H1 (cell line): ENCODE measurements at regions of chr3 and their contacts with region 1.

Region 1: GRCh38 chr3:30693470-30694120 is 87.2 kb downstream of the TGFBR2 start:
- DNase-seq: no peak
- H3K4me3 ChIP-seq: no peak overlapping the region
- H3K27ac ChIP-seq: no peak overlapping the region
- H3K4me1 ChIP-seq: peaks cover 0 to 13% (median 5%) of the 10 kb centered on the region in 4 experiments; a peak in 5 of 7 replicates
- H3K27me3 ChIP-seq: no peaks in the 10 kb centered on the region
- CTCF ChIP-seq: peak in 2 of 3 experiments; percentile 80 to 85; a peak in 3 of 4 replicates
- EP300 ChIP-seq: no peak
- POLR2A ChIP-seq: no peak
- RAD21 ChIP-seq: peak; percentile 99

Region 2: GRCh38 chr3:30319713-30320112 is 373.9 kb before region 1 on chr3:
- CTCF ChIA-PET with region 1: interaction called, 12 read pairs
- POLR2A ChIA-PET with region 1: no interaction called
- DNase-seq: peak; percentile 7 to 43
- H3K4me3 ChIP-seq: no peak overlapping the region
- H3K27ac ChIP-seq: no peak overlapping the region
- H3K4me1 ChIP-seq: peaks cover 0 to 5% (median 0%) of the 10 kb centered on the region in 4 experiments; a peak in 1 of 7 replicates
- H3K27me3 ChIP-seq: no peaks in the 10 kb centered on the region
- CTCF ChIP-seq: peak in 2 of 3 experiments; percentile 59 to 74; a peak in 3 of 4 replicates
- EP300 ChIP-seq: no peak
- POLR2A ChIP-seq: no peak
- RAD21 ChIP-seq: peak; percentile 68 to 78

Region 3: GRCh38 chr3:30634761-30635735 is 58.5 kb before region 1 on chr3:
- CTCF ChIA-PET with region 1: no interaction called
- POLR2A ChIA-PET with region 1: no interaction called
- DNase-seq: no peak
- H3K4me3 ChIP-seq: no peak overlapping the region
- H3K27ac ChIP-seq: no peak overlapping the region
- H3K4me1 ChIP-seq: no peaks in the 10 kb centered on the region
- H3K27me3 ChIP-seq: no peaks in the 10 kb centered on the region
- CTCF ChIP-seq: no peak
- EP300 ChIP-seq: no peak
- POLR2A ChIP-seq: no peak
- RAD21 ChIP-seq: no peak

Region 4: GRCh38 chr3:30681643-30682211 is 11.9 kb before region 1 on chr3:
- CTCF ChIA-PET with region 1: interaction called, 51 read pairs
- POLR2A ChIA-PET with region 1: no interaction called
- DNase-seq: no peak
- H3K4me3 ChIP-seq: no peak overlapping the region
- H3K27ac ChIP-seq: no peak overlapping the region
- H3K4me1 ChIP-seq: peaks cover 0 to 7% (median 5%) of the 10 kb centered on the region in 4 experiments; a peak in 4 of 7 replicates
- H3K27me3 ChIP-seq: no peaks in the 10 kb centered on the region
- CTCF ChIP-seq: no peak
- EP300 ChIP-seq: no peak
- POLR2A ChIP-seq: no peak
- RAD21 ChIP-seq: no peak

Region 5: DNA sequence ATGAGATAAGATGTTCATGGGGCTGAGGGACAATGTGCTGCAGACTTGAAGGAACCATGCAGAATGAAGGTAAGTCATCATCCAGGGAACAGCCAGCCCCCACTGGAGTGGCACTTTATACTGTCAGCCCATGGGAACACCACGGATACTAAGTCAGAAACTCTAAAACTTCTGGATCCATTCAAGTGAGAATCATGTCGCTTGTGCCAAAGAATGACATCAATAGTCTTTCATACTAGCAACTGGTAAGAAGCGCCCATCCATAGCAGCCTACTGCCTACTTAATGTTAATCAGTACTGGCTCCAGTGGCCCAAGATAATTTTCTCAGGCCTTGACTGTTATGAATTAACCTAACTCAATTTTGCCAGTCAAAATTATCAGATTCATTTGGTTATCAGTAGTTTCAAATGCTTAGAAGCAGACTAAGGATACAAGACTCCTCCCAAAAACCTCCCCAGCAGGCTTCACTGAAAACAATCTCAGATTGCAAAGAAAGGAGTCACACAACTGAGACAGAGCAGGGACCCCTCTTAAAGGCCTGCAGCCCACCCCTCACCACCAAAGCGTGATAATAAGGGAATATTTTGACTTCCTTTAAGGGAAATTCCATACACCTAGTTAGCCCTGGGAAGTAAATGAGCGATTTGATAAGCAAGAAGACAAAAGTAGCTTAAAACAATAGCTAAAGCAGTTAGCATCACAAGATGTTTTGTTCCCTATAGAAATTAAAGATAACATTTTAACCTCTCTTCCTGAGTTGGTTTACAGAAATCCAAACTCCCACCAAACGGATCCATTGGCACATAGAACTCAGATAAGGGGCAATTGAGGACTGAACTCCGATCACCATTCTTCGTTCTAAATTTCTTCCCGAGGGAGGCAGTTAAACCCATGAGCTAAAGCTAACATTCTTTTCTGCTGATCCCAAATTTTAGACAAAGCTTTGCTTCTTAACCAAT is 11.6 kb after region 1 on chr3:
- CTCF ChIA-PET with region 1: interaction called, 18 read pairs
- POLR2A ChIA-PET with region 1: no interaction called
- DNase-seq: no peak
- H3K4me3 ChIP-seq: no peak overlapping the region
- H3K27ac ChIP-seq: no peak overlapping the region
- H3K4me1 ChIP-seq: peaks cover 0 to 6% (median 4%) of the 10 kb centered on the region in 4 experiments; a peak in 2 of 7 replicates
- H3K27me3 ChIP-seq: no peaks in the 10 kb centered on the region
- CTCF ChIP-seq: no peak
- EP300 ChIP-seq: no peak
- POLR2A ChIP-seq: no peak
- RAD21 ChIP-seq: no peak

Region 6: DNA sequence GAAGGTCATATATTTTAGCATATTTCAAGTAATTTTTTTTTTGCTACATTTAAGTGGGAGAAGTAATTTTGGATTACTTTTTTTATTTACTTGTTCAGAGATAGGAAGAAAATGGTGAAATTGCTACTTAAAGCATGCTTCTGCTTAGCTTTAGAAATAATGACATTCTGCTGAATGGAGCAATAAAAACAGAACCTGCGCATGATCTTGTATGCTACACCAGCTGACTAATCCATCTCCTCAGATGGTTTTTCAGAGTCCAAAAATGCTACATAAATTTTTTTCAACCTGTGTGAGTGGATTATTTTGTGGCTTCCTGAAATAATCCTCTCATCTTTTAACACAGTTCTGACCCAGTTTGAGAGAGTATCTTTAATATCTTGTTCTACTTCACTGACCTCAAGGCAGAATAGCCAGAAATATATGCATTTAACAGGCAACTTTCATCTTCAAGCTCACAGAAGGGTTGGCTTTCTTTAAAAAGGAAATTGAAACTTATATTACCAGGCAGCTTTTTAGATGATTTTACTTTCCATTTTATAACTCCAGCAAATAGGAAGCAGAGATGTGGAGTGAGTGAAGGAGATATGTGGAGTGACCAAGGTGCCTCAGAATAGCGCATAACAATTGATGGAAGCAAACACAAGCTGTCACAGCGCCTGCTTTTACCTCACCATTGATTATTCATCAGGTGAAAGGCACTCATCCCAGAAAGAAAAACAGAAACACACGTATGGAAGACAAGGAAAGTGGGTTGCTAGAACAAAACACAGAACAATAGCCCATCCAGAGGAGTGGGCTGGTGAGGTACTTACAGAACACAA is 49.4 kb after region 1 on chr3:
- CTCF ChIA-PET with region 1: interaction called, 10 read pairs
- POLR2A ChIA-PET with region 1: no interaction called
- DNase-seq: no peak
- H3K4me3 ChIP-seq: no peak overlapping the region
- H3K27ac ChIP-seq: no peak overlapping the region
- H3K4me1 ChIP-seq: peaks cover 0 to 12% (median 4%) of the 10 kb centered on the region in 4 experiments; a peak in 4 of 7 replicates
- H3K27me3 ChIP-seq: no peaks in the 10 kb centered on the region
- CTCF ChIP-seq: no peak
- EP300 ChIP-seq: no peak
- POLR2A ChIP-seq: no peak
- RAD21 ChIP-seq: no peak

Region 7: DNA sequence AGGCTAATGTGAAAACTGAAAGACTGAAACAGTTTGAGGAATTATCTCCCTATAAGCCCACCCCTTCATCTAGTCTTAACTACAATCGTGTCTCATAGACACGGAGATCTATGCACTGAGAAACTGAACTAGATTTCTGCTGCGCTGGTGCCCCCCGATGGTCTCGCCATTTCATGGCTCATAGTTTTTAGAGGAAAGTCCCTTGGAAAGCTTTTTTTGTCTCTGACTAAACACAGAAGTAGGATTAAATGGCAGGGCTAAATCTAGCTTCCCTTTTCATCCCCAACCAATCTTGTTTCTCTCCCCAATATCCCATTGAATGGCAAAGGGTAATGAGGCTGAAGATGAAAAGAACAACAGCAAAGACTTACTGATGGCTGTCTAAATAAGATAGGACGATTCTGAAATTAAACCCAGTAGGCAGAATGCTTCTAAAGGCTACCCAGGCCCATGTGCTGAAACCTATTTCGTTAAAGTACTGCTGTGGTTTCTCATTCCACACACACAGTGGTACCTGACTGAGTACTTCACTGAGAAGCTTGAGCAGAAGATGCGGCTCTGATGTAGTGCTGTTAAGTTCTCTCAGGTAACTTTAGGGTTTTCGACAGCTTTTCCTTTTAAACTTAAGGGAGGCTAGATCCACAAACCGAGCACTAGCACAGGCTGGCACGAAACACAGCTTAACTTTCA is 58.2 kb after region 1 on chr3:
- CTCF ChIA-PET with region 1: interaction called, 25 read pairs
- POLR2A ChIA-PET with region 1: no interaction called
- DNase-seq: peak in 1 of 2 experiments; percentile 63
- H3K4me3 ChIP-seq: no peak overlapping the region; a peak in 1 of 8 replicates
- H3K27ac ChIP-seq: no peak overlapping the region
- H3K4me1 ChIP-seq: peaks cover 0 to 15% (median 1%) of the 10 kb centered on the region in 4 experiments; a peak in 2 of 7 replicates
- H3K27me3 ChIP-seq: no peaks in the 10 kb centered on the region
- CTCF ChIP-seq: peak; percentile 10 to 58 (median 56)
- EP300 ChIP-seq: no peak
- POLR2A ChIP-seq: no peak
- RAD21 ChIP-seq: peak; percentile 77 to 88

Region 8: DNA sequence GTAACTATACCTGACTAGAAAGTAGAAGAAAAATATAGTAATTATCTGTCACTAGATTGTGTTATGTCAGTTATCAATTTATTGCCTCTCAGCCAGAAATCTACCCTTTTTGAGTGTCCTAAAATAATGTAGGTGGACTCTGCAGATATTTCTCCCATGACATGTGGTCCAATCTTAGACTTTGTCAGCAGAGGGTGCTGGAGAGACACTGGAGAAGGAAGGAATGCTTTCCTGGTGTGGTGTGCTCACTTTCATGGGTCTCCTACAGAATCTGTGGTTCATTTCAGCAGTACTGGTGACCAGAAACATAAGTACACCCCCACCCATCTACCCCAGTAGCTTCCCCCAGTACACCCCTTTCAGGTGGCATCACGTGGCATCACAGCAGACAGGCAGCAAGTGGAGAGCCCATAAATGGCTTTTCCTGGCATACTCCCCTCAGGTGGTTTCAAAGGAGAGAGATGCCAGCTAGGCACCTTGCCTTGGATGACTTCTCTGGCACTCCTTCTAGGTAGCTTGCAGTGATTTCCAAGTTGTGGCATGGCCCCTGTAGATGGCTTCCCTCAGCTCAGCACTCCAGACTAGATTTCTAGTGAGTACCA is 86.2 kb after region 1 on chr3:
- CTCF ChIA-PET with region 1: no interaction called
- POLR2A ChIA-PET with region 1: no interaction called
- DNase-seq: peak in 1 of 2 experiments; percentile 48
- H3K4me3 ChIP-seq: no peak overlapping the region
- H3K27ac ChIP-seq: no peak overlapping the region
- H3K4me1 ChIP-seq: no peaks in the 10 kb centered on the region
- H3K27me3 ChIP-seq: no peaks in the 10 kb centered on the region
- CTCF ChIP-seq: peak; percentile 2 to 71 (median 66)
- EP300 ChIP-seq: no peak
- POLR2A ChIP-seq: no peak
- RAD21 ChIP-seq: peak; percentile 87 to 89

Region 9: GRCh38 chr3:30804984-30805383 is 111.4 kb after region 1 on chr3:
- CTCF ChIA-PET with region 1: no interaction called
- POLR2A ChIA-PET with region 1: no interaction called
- DNase-seq: no peak
- H3K4me3 ChIP-seq: no peak overlapping the region
- H3K27ac ChIP-seq: no peak overlapping the region
- H3K4me1 ChIP-seq: no peaks in the 10 kb centered on the region
- H3K27me3 ChIP-seq: no peaks in the 10 kb centered on the region
- CTCF ChIP-seq: no peak
- EP300 ChIP-seq: no peak
- POLR2A ChIP-seq: no peak
- RAD21 ChIP-seq: no peak

Region 10: DNA sequence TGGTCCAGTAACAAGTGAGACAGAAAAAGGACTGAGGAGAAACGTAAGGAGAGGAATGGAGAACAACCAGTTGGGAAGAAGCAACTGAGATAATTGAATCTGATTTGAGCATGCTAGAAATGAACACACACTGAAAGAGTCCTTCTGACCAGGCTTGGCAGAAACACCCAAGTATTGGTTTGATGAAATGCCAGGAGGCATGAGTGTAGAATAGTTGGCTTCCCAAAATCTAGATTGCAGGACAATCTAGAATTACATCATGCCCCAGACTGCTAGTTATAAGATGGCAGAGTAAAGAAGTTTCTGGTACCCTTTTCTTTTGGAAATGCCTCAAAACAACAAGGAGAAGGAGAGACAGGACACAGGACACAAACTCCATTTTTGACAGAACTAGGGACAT is 649.5 kb after region 1 on chr3:
- CTCF ChIA-PET with region 1: no interaction called
- POLR2A ChIA-PET with region 1: no interaction called
- DNase-seq: no peak
- H3K4me3 ChIP-seq: no peak overlapping the region
- H3K27ac ChIP-seq: no peak overlapping the region
- H3K4me1 ChIP-seq: peaks cover 0 to 6% (median 2%) of the 10 kb centered on the region in 4 experiments; a peak in 2 of 7 replicates
- H3K27me3 ChIP-seq: no peaks in the 10 kb centered on the region
- CTCF ChIP-seq: no peak
- EP300 ChIP-seq: no peak
- POLR2A ChIP-seq: no peak
- RAD21 ChIP-seq: no peak